Esophagus muscularis mucosa (tissue), 4 donors: ENCODE measurements at regions of chr20 and their contacts with region 1.

Region 1: DNA sequence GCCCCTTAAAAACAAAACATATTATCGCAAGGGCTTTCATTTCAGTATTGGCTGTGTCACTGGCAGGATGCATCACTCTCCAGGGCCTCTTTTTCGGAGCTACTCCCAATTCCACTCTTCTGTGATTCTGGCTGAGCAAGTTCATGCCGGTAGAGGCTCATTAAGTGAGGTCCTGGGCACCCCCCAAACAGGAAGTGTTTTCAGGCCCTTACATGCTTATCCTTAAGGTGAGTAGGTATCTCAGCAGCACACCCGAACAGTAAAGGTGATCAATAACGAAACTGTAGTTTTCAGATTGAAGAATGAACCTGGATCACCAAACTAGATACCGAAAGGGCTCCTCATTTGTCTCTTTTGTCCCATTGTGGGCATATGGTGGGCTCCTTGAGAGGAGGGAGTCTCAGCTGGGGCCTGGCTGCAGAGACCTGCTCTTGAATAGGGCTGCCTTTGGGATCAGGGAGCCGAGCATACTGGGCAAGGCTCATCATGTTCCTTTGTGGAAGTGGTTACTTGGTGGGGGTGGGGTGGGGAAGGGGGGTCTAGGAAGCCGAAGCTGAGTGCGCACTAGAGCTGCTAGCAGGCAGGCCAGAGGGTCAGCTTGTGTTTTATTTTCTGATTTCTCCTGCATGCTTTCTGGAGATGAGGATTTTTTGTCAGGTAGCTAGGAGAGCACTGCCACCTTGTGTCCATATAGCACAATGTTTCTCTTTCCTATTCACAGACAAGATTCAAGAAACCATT is 65.2 kb downstream of the CDS2 start:
- DNase-seq: no peak
- H3K4me3 ChIP-seq: no peak overlapping the region
- H3K27ac ChIP-seq: peak overlapping the region; percentile 57 to 79 (median 70)
- H3K4me1 ChIP-seq: peaks cover 9 to 11% (median 11%) of the 10 kb centered on the region in 4 donors
- H3K27me3 ChIP-seq: no peaks in the 10 kb centered on the region
- CTCF ChIP-seq: peak; percentile 77 to 82 (median 80)
- EP300 ChIP-seq: no peak
- POLR2A ChIP-seq: no peak

Region 2: GRCh38 chr20:5126512-5127203 is 65.3 kb before region 1 on chr20 and contains the start of gene CDS2:
- intact Hi-C with region 1: loop called (anchors 1 kb)
- DNase-seq: peak; percentile 100
- H3K4me3 ChIP-seq: peak within 1 kb of the TSS; percentile 92 to 98 (median 96)
- H3K27ac ChIP-seq: peak within 1 kb of the TSS; percentile 98 to 99 (median 99)
- H3K4me1 ChIP-seq: peaks cover 41 to 50% (median 46%) of the 10 kb centered on the region in 4 donors
- H3K27me3 ChIP-seq: no peaks in the 10 kb centered on the region
- CTCF ChIP-seq: peak; percentile 56 to 76 (median 75)
- EP300 ChIP-seq: no peak
- POLR2A ChIP-seq: peak; percentile 82
- total RNA-seq, gene CDS2: 54.8 to 83.1 (median 69.7) TPM

Region 3: GRCh38 chr20:5146871-5147592 is 45.0 kb before region 1 on chr20:
- intact Hi-C with region 1: loop called (anchors 5 kb)
- DNase-seq: no peak
- H3K4me3 ChIP-seq: no peak overlapping the region
- H3K27ac ChIP-seq: peak overlapping the region in 1 of 4 donors; percentile 67
- H3K4me1 ChIP-seq: peaks cover 81 to 93% (median 89%) of the 10 kb centered on the region in 4 donors
- H3K27me3 ChIP-seq: no peaks in the 10 kb centered on the region
- CTCF ChIP-seq: no peak
- EP300 ChIP-seq: no peak
- POLR2A ChIP-seq: no peak